ENCODE measurements at regions of chr4 and their contacts with region 1.

Region 1: DNA sequence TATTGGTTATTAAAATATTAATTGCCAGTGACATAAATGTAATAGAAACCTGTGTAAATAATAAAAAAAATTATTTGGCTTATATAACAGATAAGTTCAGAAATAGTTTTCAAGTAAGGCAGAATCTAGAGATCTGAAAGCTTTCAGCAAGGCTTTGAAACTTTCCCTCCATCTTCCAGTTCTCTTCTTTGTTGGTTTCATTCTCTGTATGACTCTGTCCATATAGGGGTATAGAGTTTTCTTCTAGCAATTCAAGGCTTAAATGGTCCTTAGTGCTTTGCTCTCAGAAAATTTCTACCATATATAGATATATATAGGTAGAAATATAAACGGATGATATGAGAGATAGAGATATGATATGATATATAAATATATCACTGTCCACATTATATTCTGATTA is 160.5 kb upstream of the GABRA2 start:
- DNase-seq: no peak
- H3K4me3 Mint-ChIP-seq: no peak overlapping the region
- H3K27ac Mint-ChIP-seq: no peak overlapping the region
- H3K4me1 Mint-ChIP-seq: no peaks in the 10 kb centered on the region
- H3K27me3 Mint-ChIP-seq: no peaks in the 10 kb centered on the region

Region 2: DNA sequence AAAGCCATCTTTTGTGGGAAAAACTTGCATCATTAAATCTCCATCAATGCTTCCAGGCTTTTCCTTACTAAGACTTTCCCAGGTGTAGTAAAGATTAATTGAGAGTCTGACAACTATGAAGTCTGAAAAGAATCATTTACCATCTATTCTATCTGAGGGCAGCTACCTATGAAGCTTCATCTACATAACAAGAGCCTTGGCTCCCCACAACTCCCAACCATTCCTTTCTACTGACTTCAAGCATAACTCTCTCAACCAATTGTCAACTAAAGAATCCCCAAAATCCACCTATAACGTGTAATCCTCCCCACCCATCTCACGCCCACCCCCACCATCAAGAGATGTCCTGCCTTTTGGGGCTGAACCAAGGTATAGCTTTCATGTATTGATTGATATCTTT is 59.0 kb before region 1 on chr4:
- CTCF ChIA-PET with region 1: no interaction called
- intact Hi-C with region 1: loop called (anchors 10 kb)
- DNase-seq: no peak
- H3K4me3 Mint-ChIP-seq: no peak overlapping the region
- H3K27ac Mint-ChIP-seq: no peak overlapping the region
- H3K4me1 Mint-ChIP-seq: no peaks in the 10 kb centered on the region
- H3K27me3 Mint-ChIP-seq: no peaks in the 10 kb centered on the region

Region 3: GRCh38 chr4:46975812-46976553 is 425.5 kb after region 1 on chr4:
- CTCF ChIA-PET with region 1: no interaction called
- intact Hi-C with region 1: no loop called
- DNase-seq: no peak
- H3K4me3 Mint-ChIP-seq: no peak overlapping the region
- H3K27ac Mint-ChIP-seq: no peak overlapping the region
- H3K4me1 Mint-ChIP-seq: no peaks in the 10 kb centered on the region
- H3K27me3 Mint-ChIP-seq: no peaks in the 10 kb centered on the region

Measured in activated naive CD4-positive, alpha-beta T cell treated with anti-CD3 and anti-CD28 coated beads for 36 hours (primary cell).